Caco-2 (cell line): ENCODE measurements at regions of chr2 and their contacts with region 1.

Region 1: GRCh38 chr2:170235860-170236679 is 58.1 kb downstream of the MYO3B start:
- DNase-seq: peak; percentile 46 to 82
- H3K4me3 ChIP-seq: no peak overlapping the region
- H3K4me3 Mint-ChIP-seq: no peak overlapping the region
- H3K27ac Mint-ChIP-seq: no peak overlapping the region
- H3K4me1 ChIP-seq: peaks cover 12% of the 10 kb centered on the region; the same call in 1 of the 2 replicates
- H3K4me1 Mint-ChIP-seq: peaks cover 31% of the 10 kb centered on the region
- H3K27me3 ChIP-seq: no peaks in the 10 kb centered on the region
- H3K27me3 Mint-ChIP-seq: no peaks in the 10 kb centered on the region
- CTCF ChIP-seq: peak; percentile 68 to 79

Region 2: DNA sequence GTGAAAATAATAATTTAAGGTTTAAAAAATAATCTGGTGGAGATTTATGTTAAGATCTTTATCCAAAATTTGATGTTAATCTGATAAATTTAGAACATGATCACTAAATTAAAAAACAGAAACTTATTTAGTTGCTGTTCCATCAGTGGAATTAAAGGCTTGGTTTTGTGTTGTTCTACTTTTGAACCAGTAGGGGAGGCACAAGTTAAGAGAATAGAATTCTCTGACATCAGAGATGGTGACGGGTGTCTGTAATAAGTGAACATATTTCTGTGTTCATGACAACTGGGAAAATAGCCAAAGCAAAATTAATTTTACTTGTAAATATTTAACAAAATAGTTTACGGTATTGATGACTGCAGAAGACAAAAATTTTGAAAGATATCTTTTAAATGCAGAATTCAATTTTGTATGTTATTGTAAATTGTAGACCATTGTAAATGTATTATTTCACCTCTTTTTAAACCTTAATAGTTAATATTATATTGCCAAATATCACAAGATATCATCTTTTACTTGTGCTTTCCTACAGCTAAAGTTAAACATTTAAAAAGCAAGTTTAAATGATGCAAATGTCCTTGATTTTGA is 302.9 kb before region 1 on chr2:
- CTCF ChIA-PET with region 1: no interaction called
- POLR2A ChIA-PET with region 1: no interaction called
- intact Hi-C with region 1: loop called (anchors 10 kb)
- DNase-seq: peak in 1 of 2 experiments; percentile 22
- H3K4me3 ChIP-seq: no peak overlapping the region
- H3K4me3 Mint-ChIP-seq: no peak overlapping the region
- H3K27ac Mint-ChIP-seq: no peak overlapping the region
- H3K4me1 ChIP-seq: no peaks in the 10 kb centered on the region
- H3K4me1 Mint-ChIP-seq: no peaks in the 10 kb centered on the region
- H3K27me3 ChIP-seq: no peaks in the 10 kb centered on the region
- H3K27me3 Mint-ChIP-seq: no peaks in the 10 kb centered on the region
- CTCF ChIP-seq: peak; percentile 49 to 70

Region 3: DNA sequence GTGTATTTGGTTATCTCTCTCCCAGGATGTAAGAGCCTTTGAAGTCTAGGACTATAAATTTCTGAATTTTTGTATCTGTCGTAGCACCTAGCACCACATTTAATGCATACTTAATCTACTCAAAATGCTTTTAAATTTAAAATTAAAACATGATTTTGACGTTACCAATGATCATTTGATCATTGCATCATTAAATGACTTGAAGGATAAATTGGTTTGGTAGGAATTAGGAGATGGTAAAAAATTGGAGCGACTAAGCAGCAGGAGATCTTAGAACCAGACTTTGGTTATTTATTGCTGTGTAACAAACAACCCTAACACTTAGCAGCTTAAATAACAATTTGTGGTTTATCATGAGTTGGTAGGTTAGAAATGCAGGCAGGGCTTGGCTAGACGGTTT is 26.7 kb after region 1 on chr2:
- CTCF ChIA-PET with region 1: interaction called, 13 read pairs
- POLR2A ChIA-PET with region 1: no interaction called
- intact Hi-C with region 1: loop called (anchors 2 kb)
- DNase-seq: no peak
- H3K4me3 ChIP-seq: no peak overlapping the region
- H3K4me3 Mint-ChIP-seq: peak overlapping the region; percentile 8
- H3K27ac Mint-ChIP-seq: peak overlapping the region; percentile 50
- H3K4me1 ChIP-seq: peaks cover 20% of the 10 kb centered on the region
- H3K4me1 Mint-ChIP-seq: peaks cover 36% of the 10 kb centered on the region
- H3K27me3 ChIP-seq: no peaks in the 10 kb centered on the region
- H3K27me3 Mint-ChIP-seq: no peaks in the 10 kb centered on the region
- CTCF ChIP-seq: no peak

Region 4: GRCh38 chr2:170324640-170325046 is 88.6 kb after region 1 on chr2:
- CTCF ChIA-PET with region 1: interaction called, 5 read pairs
- POLR2A ChIA-PET with region 1: no interaction called
- intact Hi-C with region 1: loop called (anchors 1 kb)
- DNase-seq: peak; percentile 50 to 63
- H3K4me3 ChIP-seq: no peak overlapping the region
- H3K4me3 Mint-ChIP-seq: no peak overlapping the region
- H3K27ac Mint-ChIP-seq: no peak overlapping the region
- H3K4me1 ChIP-seq: peaks cover 7% of the 10 kb centered on the region; the same call in 1 of the 2 replicates
- H3K4me1 Mint-ChIP-seq: no peaks in the 10 kb centered on the region
- H3K27me3 ChIP-seq: no peaks in the 10 kb centered on the region; the same call in 1 of the 2 replicates
- H3K27me3 Mint-ChIP-seq: no peaks in the 10 kb centered on the region
- CTCF ChIP-seq: peak; percentile 78 to 87

Region 5: GRCh38 chr2:170361090-170361936 is 125.2 kb after region 1 on chr2:
- CTCF ChIA-PET with region 1: interaction called, 9 read pairs
- POLR2A ChIA-PET with region 1: interaction called, 3 read pairs
- intact Hi-C with region 1: loop called (anchors 1 kb)
- DNase-seq: peak; percentile 58 to 70
- H3K4me3 ChIP-seq: no peak overlapping the region
- H3K4me3 Mint-ChIP-seq: no peak overlapping the region
- H3K27ac Mint-ChIP-seq: no peak overlapping the region
- H3K4me1 ChIP-seq: no peaks in the 10 kb centered on the region
- H3K4me1 Mint-ChIP-seq: peaks cover 10% of the 10 kb centered on the region
- H3K27me3 ChIP-seq: no peaks in the 10 kb centered on the region
- H3K27me3 Mint-ChIP-seq: no peaks in the 10 kb centered on the region
- CTCF ChIP-seq: peak; percentile 81 to 87

Region 6: GRCh38 chr2:171124541-171124940 is 888.5 kb after region 1 on chr2:
- CTCF ChIA-PET with region 1: no interaction called
- POLR2A ChIA-PET with region 1: no interaction called
- intact Hi-C with region 1: no loop called
- DNase-seq: no peak
- H3K4me3 ChIP-seq: no peak overlapping the region
- H3K4me3 Mint-ChIP-seq: no peak overlapping the region
- H3K27ac Mint-ChIP-seq: no peak overlapping the region
- H3K4me1 ChIP-seq: no peaks in the 10 kb centered on the region
- H3K4me1 Mint-ChIP-seq: no peaks in the 10 kb centered on the region
- H3K27me3 ChIP-seq: no peaks in the 10 kb centered on the region
- H3K27me3 Mint-ChIP-seq: no peaks in the 10 kb centered on the region
- CTCF ChIP-seq: no peak